Cardiac septum (tissue), 1 donor: ENCODE measurements at regions of chr6 and their contacts with region 1.

Region 1: DNA sequence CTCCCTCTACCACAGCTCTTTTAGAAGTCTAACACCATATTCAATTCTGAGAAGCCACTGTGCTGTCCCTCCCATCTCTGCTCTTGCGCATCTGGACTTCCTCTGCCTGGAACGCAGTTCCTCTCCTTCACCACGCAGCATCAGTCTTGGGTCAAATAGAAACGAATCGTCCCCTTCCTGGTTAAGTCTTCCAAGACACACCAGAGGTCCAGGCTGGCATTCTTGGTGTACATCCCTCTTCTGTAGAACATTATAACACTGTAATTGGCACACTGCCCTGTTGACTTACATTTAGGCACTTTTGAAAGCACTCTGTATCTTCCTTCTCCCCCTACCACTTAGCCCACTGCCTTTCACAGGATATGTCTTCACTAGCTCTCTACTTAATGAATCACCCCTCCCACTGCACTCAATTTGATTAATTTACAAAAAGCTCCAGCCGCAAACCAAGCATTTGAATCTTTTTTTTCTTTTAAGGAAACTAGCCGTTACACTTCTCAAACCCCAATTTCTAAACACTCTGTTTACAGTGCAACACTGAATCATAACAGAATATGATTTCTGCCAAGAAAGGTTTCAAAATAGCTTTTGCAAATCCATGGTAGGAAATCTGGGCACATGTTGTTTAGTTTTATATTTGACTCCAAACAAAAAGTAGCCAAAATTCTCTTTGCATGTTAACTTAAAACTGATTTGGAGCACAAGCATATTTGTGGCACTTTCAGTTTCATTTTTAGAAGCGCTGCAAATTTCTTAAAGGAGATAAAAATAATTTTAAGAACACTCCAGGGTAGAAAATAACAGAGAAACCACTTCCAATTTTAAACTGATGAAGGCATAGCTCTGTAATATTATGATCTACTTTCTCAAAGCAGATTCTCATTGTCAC is 140.7 kb upstream of the CARMIL1 start:
- DNase-seq: peak; percentile 81

Region 2: DNA sequence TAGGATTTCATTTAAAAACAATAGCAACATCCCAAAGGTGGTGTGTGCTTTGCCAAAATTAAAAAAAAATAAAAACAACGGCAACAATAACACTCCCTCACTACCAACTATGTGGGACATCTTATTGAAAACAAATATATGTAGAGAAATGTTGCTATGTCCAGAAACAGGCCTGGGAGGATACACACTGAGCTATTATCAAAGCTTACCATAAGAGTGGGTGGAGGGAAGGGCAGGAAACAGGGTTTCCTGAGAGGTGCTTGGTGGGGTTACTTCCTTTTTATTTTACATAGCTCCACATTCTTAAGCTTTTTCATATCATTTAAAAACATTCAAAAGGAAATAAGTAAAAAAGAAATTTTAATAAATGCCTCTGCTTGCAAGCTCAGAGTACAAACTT is 52.7 kb before region 1 on chr6:
- intact Hi-C with region 1: loop called (anchors 5 kb)
- DNase-seq: no peak

Region 3: DNA sequence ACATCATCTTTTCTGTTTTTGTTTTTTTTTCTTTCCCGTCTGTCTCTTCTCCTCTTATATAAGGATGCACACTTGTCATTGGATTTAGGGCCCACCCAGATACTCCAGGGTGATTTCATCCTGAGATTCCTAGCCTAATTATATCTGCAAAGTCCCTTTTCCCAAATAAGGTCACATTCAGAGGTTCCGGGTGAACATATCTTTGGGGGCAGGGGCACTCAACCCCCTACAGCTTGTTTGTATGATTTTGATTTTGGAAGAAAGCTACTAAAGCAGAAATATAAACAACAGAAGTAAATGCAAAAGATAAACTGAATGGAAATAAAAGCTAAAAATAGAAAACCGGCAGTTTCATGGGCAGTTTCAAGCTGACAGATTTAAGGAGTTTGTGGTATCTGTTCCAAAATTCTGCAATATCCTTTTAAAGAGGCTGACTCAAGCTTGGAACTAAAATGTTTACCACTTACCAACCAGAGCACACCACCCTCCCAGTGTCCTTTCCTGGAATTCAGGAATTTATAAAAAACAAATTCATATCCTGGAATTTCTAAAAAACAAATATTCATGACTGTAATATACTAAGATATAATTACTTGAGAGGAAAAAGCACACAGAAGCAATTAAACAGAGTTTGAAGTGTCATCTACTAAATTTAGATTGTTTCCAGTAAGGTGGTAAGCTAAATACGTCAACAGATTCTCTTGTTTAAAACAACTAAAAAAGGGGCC is 40.7 kb after region 1 on chr6:
- intact Hi-C with region 1: loop called (anchors 5 kb)
- DNase-seq: no peak

Region 4: GRCh38 chr6:25193460-25194171 is 55.1 kb after region 1 on chr6:
- intact Hi-C with region 1: loop called (anchors 5 kb)
- DNase-seq: no peak

Region 5: GRCh38 chr6:25223490-25223991 is 85.1 kb after region 1 on chr6:
- intact Hi-C with region 1: loop called (anchors 5 kb)
- DNase-seq: no peak

Region 6: GRCh38 chr6:25359191-25359861 is 220.8 kb after region 1 on chr6:
- intact Hi-C with region 1: no loop called
- DNase-seq: no peak